ENCODE measurements at regions of chr18 and their contacts with region 1.

Region 1: DNA sequence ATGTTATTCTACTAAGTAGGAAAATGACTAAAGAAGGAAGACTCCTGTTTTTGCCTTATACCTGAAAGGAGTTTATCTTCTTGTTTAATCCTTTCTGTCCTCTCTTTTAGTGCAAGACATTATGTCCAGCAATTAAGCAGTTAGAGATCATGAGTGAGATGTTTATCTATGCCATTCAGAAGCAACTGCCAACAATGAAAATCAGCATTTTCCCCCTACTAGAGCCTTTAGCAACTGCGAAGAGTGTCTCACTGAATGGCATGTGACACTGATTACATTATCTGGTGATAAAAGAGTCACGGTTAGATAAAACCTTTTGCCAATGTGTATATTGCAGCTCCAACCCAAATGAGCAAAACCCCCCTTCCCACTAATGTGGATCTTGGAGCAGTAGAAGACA is 357.7 kb upstream of the SYT4 start:
- DNase-seq: no peak
- H3K4me3 ChIP-seq: no peak overlapping the region
- H3K27ac ChIP-seq: no peak overlapping the region
- H3K4me1 ChIP-seq: no peaks in the 10 kb centered on the region
- H3K27me3 ChIP-seq: no peaks in the 10 kb centered on the region
- CTCF ChIP-seq: no peak
- EP300 ChIP-seq: no peak
- POLR2A ChIP-seq: no peak
- RAD21 ChIP-seq: no peak

Region 2: DNA sequence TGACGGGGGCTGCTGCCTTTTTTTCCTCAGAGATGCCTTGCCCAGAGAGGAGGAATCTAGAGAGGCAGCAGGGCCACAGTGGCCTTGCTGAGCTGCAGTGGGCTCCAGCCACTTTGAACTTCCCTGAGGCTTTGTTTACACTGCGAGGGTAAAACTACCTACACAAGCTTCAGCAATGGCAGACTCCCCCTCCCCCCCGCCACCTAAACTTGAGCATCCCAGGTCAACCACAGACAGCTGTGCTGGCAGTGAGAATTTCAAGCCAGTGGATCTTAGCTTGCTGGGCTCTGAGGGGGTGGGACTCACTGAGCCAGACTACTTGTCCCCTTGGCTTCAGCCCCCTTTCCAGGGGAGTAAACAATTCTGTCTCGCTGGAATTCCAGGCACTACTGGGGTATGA is 369.5 kb before region 1 on chr18:
- CTCF ChIA-PET with region 1: no interaction called
- POLR2A ChIA-PET with region 1: no interaction called
- DNase-seq: no peak
- H3K4me3 ChIP-seq: no peak overlapping the region
- H3K27ac ChIP-seq: no peak overlapping the region
- H3K4me1 ChIP-seq: no peaks in the 10 kb centered on the region
- H3K27me3 ChIP-seq: no peaks in the 10 kb centered on the region
- CTCF ChIP-seq: no peak
- EP300 ChIP-seq: no peak
- POLR2A ChIP-seq: no peak
- RAD21 ChIP-seq: no peak

Region 3: DNA sequence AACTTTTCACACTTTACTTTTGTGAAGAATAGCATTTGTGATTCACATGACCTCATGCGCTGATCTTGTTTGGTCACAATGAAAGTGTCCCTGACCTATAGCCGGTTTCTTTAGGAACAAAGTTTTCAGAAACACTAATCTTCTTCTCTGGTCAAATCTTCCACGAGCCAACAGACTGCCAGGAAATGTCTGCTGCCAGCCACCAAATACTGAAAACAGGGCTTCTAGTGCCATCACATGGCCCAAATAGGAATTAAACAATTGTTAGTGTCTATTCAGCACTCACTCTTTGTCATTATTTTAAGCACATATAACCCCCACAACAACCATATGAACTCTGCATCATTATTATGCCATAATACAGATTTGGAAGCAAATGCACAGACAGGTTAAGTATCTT is 71.2 kb before region 1 on chr18:
- CTCF ChIA-PET with region 1: no interaction called
- POLR2A ChIA-PET with region 1: no interaction called
- DNase-seq: no peak
- H3K4me3 ChIP-seq: no peak overlapping the region
- H3K27ac ChIP-seq: no peak overlapping the region
- H3K4me1 ChIP-seq: no peaks in the 10 kb centered on the region
- H3K27me3 ChIP-seq: no peaks in the 10 kb centered on the region
- CTCF ChIP-seq: peak in 2 of 3 experiments; percentile 70; a peak in 3 of 4 replicates
- EP300 ChIP-seq: no peak
- POLR2A ChIP-seq: no peak
- RAD21 ChIP-seq: peak; percentile 90 to 96

Region 4: DNA sequence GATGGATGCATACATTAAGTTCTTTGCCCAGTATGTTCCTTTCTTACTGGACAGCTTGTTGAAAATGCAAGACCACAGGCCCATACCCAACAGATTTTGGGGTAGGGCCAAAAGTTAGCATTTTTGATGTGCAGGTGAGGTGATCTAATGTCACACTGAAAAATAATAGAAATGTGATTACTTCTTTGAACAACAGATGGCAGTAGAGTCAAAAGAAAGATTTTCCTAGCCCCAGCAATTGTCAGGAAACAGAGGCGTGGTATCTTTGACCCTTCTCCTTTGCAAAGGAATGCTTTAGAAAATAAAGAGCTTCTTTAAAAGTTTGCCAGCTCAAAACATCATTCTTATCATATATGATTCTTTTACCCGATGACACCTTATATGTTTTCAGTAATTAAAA is 14.1 kb before region 1 on chr18:
- CTCF ChIA-PET with region 1: interaction called, 16 read pairs
- POLR2A ChIA-PET with region 1: no interaction called
- DNase-seq: no peak
- H3K4me3 ChIP-seq: no peak overlapping the region
- H3K27ac ChIP-seq: no peak overlapping the region
- H3K4me1 ChIP-seq: no peaks in the 10 kb centered on the region
- H3K27me3 ChIP-seq: no peaks in the 10 kb centered on the region
- CTCF ChIP-seq: peak in 2 of 3 experiments; percentile 33 to 47; a peak in 2 of 4 replicates
- EP300 ChIP-seq: no peak
- POLR2A ChIP-seq: no peak
- RAD21 ChIP-seq: peak; percentile 80 to 82